Dorsolateral prefrontal cortex (tissue), 120 donors: ENCODE measurements at regions of chr14 and their contacts with region 1.

Region 1: GRCh38 chr14:64986578-64987571 is at the start of gene FNTB:
- DNase-seq: peak; percentile 87 to 97 (median 96)
- H3K4me3 ChIP-seq: peak within 1 kb of the TSS; percentile 51 to 97 (median 85)
- H3K27ac ChIP-seq: peak within 1 kb of the TSS; percentile 72 to 98 (median 91)
- H3K27me3 ChIP-seq: no peaks in the 10 kb centered on the region
- CTCF ChIP-seq: peak; percentile 67 to 99 (median 94)
- total RNA-seq, gene FNTB: 19.3 to 93.3 (median 34.4) TPM

Region 2: GRCh38 chr14:64531567-64531966 is 455.3 kb before region 1 on chr14:
- intact Hi-C with region 1: no loop called
- DNase-seq: no peak
- H3K4me3 ChIP-seq: no peak overlapping the region
- H3K27ac ChIP-seq: no peak overlapping the region
- H3K27me3 ChIP-seq: no peaks in the 10 kb centered on the region
- CTCF ChIP-seq: no peak

Region 3: DNA sequence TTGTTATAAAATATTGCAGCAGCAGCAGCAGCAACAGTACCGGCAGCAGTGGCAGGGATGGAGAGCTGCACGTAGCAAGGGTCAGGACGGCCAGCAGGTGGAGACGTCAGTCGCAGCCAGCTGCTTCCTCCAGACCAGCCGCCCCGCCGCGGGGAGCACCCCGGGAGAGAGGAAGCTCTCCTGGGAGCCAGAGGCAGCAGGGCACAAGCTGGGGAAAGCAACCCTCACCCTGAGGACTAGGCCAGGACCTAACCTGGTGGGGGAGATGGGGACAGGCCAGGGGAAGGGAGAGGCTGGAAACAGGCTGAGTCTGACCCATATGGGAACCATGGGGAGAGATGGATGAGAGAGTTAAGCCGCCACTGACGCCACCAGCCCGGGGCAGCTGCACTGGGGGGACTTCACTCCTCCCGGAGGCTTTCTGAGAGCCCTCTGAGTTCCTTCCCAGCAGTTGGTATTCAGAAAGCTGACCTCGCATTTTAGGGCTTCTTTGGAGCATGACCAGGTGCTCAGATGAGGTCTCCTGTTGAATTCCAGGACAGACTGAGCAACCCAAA is 163.5 kb before region 1 on chr14:
- intact Hi-C with region 1: loop called in 1 of 2 experiments (anchors 10 kb)
- DNase-seq: peak; percentile 58 to 85 (median 68)
- H3K4me3 ChIP-seq: peak overlapping the region in 33 of 59 donors; percentile 1 to 54 (median 32)
- H3K27ac ChIP-seq: peak overlapping the region in 3 of 59 donors; percentile 13 to 72 (median 18)
- H3K27me3 ChIP-seq: no peaks in the 10 kb centered on the region
- CTCF ChIP-seq: peak; percentile 39 to 89 (median 74)

Region 4: GRCh38 chr14:64914237-64914971 is 72.5 kb before region 1 on chr14 and contains the start of gene CHURC1:
- intact Hi-C with region 1: loop called (anchors 10 kb)
- DNase-seq: peak; percentile 94 to 99 (median 98)
- H3K4me3 ChIP-seq: peak within 1 kb of the TSS; percentile 75 to 100 (median 97)
- H3K27ac ChIP-seq: peak within 1 kb of the TSS; percentile 10 to 98 (median 91)
- H3K27me3 ChIP-seq: no peaks in the 10 kb centered on the region
- CTCF ChIP-seq: peak in 23 of 56 donors; percentile 6 to 42 (median 16)
- total RNA-seq, gene CHURC1: 39.7 to 80.2 (median 55.2) TPM

Region 5: DNA sequence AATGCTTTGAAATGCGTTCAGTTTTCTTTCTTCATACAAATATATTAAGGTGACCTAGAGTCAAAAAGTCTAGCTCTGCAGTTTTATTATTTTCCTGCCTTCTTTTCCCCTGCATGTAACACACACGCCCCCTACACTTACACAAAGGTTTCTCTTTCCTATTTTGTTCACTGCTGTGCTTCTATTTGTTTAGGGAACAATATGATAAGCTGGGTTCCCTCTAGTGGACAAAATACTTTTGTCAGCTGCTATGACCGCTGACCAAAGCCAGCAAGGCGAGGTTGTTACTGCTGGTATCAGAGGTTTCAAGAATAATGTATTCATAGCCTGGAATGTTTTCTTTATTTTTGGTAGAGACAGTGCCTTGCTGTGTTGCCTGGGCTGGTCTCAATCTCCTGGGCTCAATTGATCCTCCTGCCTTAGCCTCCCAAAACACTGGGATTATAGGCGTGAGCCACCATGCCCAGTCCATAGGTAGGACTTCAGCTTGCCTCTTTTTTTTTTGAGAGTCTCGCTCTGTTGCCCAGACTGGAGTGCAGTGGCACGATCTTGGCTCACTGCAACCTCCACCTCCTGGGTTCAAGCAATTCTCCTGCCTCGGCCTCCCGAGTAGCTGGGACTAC is 33.2 kb after region 1 on chr14:
- intact Hi-C with region 1: loop called (anchors 1 kb)
- DNase-seq: peak in 3 of 10 donors; percentile 42 to 57 (median 46)
- H3K4me3 ChIP-seq: peak overlapping the region in 7 of 59 donors; percentile 2 to 29 (median 14)
- H3K27ac ChIP-seq: peak overlapping the region in 45 of 59 donors; percentile 2 to 91 (median 43)
- H3K27me3 ChIP-seq: no peaks in the 10 kb centered on the region
- CTCF ChIP-seq: peak; percentile 62 to 94 (median 84)

Region 6: GRCh38 chr14:65102441-65103149 is 115.7 kb after region 1 on chr14 and contains the start of gene MAX:
- intact Hi-C with region 1: loop called (anchors 1 to 2 kb)
- DNase-seq: peak; percentile 98 to 100 (median 99)
- H3K4me3 ChIP-seq: peak within 1 kb of the TSS; percentile 74 to 100 (median 93)
- H3K27ac ChIP-seq: peak within 1 kb of the TSS in 54 of 59 donors; percentile 31 to 92 (median 77)
- H3K27me3 ChIP-seq: no peaks in the 10 kb centered on the region
- CTCF ChIP-seq: peak in 34 of 56 donors; percentile 5 to 58 (median 27)
- total RNA-seq, gene MAX: 73.6 to 138 (median 106) TPM

Region 7: GRCh38 chr14:65170768-65171507 is 184.1 kb after region 1 on chr14:
- intact Hi-C with region 1: loop called in 1 of 2 experiments (anchors 2 kb)
- DNase-seq: peak; percentile 18 to 78 (median 60)
- H3K4me3 ChIP-seq: peak overlapping the region; percentile 30 to 75 (median 54)
- H3K27ac ChIP-seq: peak overlapping the region in 58 of 59 donors; percentile 59 to 98 (median 91)
- H3K27me3 ChIP-seq: no peaks in the 10 kb centered on the region
- CTCF ChIP-seq: peak in 46 of 56 donors; percentile 4 to 66 (median 42)